ENCODE measurements at regions of chr17 and their contacts with region 1.

Region 1: DNA sequence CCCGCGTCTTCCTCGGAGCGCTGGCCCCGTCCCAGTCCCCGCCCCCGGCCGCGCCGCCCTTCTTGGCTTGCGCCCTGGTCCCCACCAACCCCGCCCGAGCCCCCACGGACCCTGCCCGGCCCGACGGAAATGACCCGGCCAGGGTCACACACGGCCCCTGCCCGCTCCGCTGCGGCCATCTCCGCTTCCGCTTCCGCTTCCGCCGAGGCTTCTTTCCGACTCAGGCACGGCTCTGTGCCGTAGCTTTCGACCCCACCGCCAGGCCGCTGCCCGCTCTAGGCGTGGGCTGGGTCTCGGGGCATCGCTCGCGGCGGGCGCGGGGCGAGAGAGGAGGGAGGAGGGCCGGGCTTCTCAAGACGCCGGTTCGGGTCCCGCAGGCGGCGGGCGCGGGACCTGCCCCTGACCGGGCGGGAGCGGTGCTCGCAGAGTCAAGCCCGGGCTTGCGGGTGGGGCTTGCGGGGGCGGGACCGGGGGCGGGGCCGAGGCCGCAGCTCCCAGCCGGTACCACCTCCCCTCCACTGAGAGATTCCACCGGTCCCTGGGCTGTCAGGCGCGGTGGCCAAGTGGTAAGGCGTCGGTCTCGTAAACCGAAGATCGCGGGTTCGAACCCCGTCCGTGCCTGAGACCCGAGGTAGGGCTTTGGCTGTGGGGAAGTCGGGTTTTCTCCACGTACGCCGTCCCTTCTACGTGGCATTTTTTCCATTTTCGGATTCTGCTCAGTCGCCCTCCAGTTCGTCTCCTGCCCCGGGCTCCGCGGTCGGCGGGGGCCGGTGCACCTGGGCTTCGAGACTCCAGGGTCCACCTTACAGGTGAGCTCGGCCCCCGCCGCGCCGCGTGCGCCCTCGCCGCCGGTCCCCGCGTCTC is 158.3 kb downstream of the RAB11FIP4 start:
- DNase-seq: peak; percentile 73 to 95 (median 88)
- ATAC-seq: peak; percentile 89
- H3K4me3 ChIP-seq: peak overlapping the region; percentile 73 to 87
- H3K4me3 Mint-ChIP-seq: peak overlapping the region; percentile 87
- H3K27ac ChIP-seq: peak overlapping the region; percentile 56 to 75
- H3K27ac Mint-ChIP-seq: peak overlapping the region; percentile 64
- H3K4me1 ChIP-seq: peaks cover 17% of the 10 kb centered on the region
- H3K4me1 Mint-ChIP-seq: peaks cover 16% of the 10 kb centered on the region
- H3K27me3 ChIP-seq: no peaks in the 10 kb centered on the region
- H3K27me3 Mint-ChIP-seq: no peaks in the 10 kb centered on the region
- CTCF ChIP-seq: no peak

Region 2: GRCh38 chr17:31156326-31156725 is 393.4 kb before region 1 on chr17:
- CTCF ChIA-PET with region 1: no interaction called
- POLR2A ChIA-PET with region 1: no interaction called
- intact Hi-C with region 1: no loop called
- DNase-seq: no peak
- ATAC-seq: no peak
- H3K4me3 ChIP-seq: no peak overlapping the region
- H3K4me3 Mint-ChIP-seq: no peak overlapping the region
- H3K27ac ChIP-seq: no peak overlapping the region
- H3K27ac Mint-ChIP-seq: no peak overlapping the region
- H3K4me1 ChIP-seq: no peaks in the 10 kb centered on the region
- H3K4me1 Mint-ChIP-seq: peaks cover 19% of the 10 kb centered on the region
- H3K27me3 ChIP-seq: no peaks in the 10 kb centered on the region
- H3K27me3 Mint-ChIP-seq: no peaks in the 10 kb centered on the region
- CTCF ChIP-seq: no peak

Region 3: DNA sequence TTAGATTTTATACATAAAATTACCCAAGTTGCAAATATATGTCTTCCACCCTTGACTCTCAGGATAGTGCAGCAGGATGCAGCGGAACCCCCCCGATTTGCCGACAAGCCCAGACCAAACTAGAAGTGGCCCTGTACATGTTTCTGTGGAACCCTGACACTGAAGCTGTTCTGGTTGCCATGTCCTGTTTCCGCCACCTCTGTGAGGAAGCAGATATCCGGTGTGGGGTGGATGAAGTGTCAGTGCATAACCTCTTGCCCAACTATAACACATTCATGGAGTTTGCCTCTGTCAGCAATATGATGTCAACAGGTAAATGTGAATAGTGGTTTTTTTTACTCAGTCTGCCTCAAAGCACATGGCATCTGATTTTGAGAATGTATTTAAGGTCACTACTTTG is 323.4 kb before region 1 on chr17:
- CTCF ChIA-PET with region 1: no interaction called
- POLR2A ChIA-PET with region 1: no interaction called
- intact Hi-C with region 1: no loop called
- DNase-seq: peak in 1 of 9 experiments; percentile 12
- ATAC-seq: no peak
- H3K4me3 ChIP-seq: no peak overlapping the region
- H3K4me3 Mint-ChIP-seq: no peak overlapping the region
- H3K27ac ChIP-seq: no peak overlapping the region
- H3K27ac Mint-ChIP-seq: no peak overlapping the region
- H3K4me1 ChIP-seq: no peaks in the 10 kb centered on the region
- H3K4me1 Mint-ChIP-seq: peaks cover 5% of the 10 kb centered on the region
- H3K27me3 ChIP-seq: no peaks in the 10 kb centered on the region
- H3K27me3 Mint-ChIP-seq: no peaks in the 10 kb centered on the region
- CTCF ChIP-seq: no peak

Region 4: GRCh38 chr17:31487648-31488263 is 62.0 kb before region 1 on chr17:
- CTCF ChIA-PET with region 1: no interaction called
- POLR2A ChIA-PET with region 1: no interaction called
- intact Hi-C with region 1: loop called in 1 of 2 experiments (anchors 1 kb)
- DNase-seq: peak; percentile 92 to 98 (median 96)
- ATAC-seq: peak; percentile 91
- H3K4me3 ChIP-seq: peak overlapping the region; percentile 80 to 83
- H3K4me3 Mint-ChIP-seq: peak overlapping the region; percentile 92
- H3K27ac ChIP-seq: peak overlapping the region; percentile 85 to 89
- H3K27ac Mint-ChIP-seq: peak overlapping the region; percentile 96
- H3K4me1 ChIP-seq: peaks cover 49% of the 10 kb centered on the region
- H3K4me1 Mint-ChIP-seq: peaks cover 50% of the 10 kb centered on the region
- H3K27me3 ChIP-seq: no peaks in the 10 kb centered on the region
- H3K27me3 Mint-ChIP-seq: no peaks in the 10 kb centered on the region
- CTCF ChIP-seq: no peak

Region 5: GRCh38 chr17:31494259-31495021 is 55.3 kb before region 1 on chr17:
- CTCF ChIA-PET with region 1: no interaction called
- POLR2A ChIA-PET with region 1: no interaction called
- intact Hi-C with region 1: loop called in 1 of 2 experiments (anchors 2 kb)
- DNase-seq: peak in 8 of 9 experiments; percentile 53 to 91 (median 72)
- ATAC-seq: peak; percentile 81
- H3K4me3 ChIP-seq: peak overlapping the region in 1 of 2 experiments; percentile 20
- H3K4me3 Mint-ChIP-seq: peak overlapping the region; percentile 76
- H3K27ac ChIP-seq: peak overlapping the region; percentile 76 to 89
- H3K27ac Mint-ChIP-seq: peak overlapping the region; percentile 97
- H3K4me1 ChIP-seq: peaks cover 97% of the 10 kb centered on the region
- H3K4me1 Mint-ChIP-seq: peaks cover 97% of the 10 kb centered on the region
- H3K27me3 ChIP-seq: no peaks in the 10 kb centered on the region
- H3K27me3 Mint-ChIP-seq: no peaks in the 10 kb centered on the region
- CTCF ChIP-seq: no peak

Region 6: DNA sequence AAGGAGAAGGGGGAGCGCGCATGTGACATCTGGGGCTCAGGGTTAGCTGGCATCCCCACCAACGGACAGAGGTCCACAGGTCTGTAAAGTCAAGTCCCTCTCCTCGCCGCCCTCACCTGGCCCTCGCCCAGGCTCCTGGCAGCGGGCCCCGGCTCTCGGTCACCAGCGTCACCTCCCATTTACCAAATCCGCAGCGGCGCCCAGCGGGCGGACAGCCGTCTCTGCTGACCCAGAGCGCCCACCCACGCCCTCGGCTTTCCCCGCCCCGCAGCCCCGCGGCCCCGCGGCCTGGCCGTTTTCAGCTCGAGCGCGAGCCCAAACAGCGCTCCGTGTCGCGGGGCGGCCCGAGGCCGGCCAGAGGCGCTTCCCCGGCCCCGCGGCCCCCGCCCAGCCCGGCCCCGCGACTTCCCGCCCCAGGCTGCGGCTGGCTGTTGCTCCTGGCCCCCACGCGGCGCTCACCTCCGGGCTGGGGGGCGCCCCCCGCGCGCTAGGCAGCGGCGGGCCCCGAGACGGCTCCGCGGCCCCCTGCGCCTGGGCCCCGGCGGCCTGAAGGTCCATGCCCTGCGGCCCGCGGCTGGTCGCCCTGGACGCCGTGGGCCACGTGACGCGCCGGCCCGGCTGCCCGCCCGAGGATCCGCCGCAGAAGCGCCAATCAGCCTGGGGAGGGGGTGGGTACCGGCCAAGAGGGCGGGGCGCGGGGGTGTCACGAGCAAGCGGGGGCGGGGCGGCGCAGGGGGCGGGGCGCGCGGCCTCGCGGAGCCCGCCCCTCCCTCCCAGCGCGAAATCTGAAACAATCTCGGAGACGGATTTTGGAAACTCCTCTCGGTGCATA is 309.1 kb after region 1 on chr17 and contains the start of gene COPRS:
- CTCF ChIA-PET with region 1: no interaction called
- POLR2A ChIA-PET with region 1: no interaction called
- intact Hi-C with region 1: loop called in 1 of 2 experiments (anchors 2 kb)
- DNase-seq: peak; percentile 53 to 88 (median 77)
- ATAC-seq: peak; percentile 92
- H3K4me3 ChIP-seq: peak within 1 kb of the TSS; percentile 53 to 69
- H3K4me3 Mint-ChIP-seq: peak within 1 kb of the TSS; percentile 86
- H3K27ac ChIP-seq: no peak within 1 kb of the TSS
- H3K27ac Mint-ChIP-seq: peak within 1 kb of the TSS; percentile 15
- H3K4me1 ChIP-seq: peaks cover 14% of the 10 kb centered on the region
- H3K4me1 Mint-ChIP-seq: peaks cover 16% of the 10 kb centered on the region
- H3K27me3 ChIP-seq: no peaks in the 10 kb centered on the region
- H3K27me3 Mint-ChIP-seq: no peaks in the 10 kb centered on the region
- CTCF ChIP-seq: no peak
- total RNA-seq, gene COPRS: 2.4 to 2.6 TPM

Region 7: GRCh38 chr17:31900877-31901276 is 351.1 kb after region 1 on chr17:
- CTCF ChIA-PET with region 1: no interaction called
- POLR2A ChIA-PET with region 1: no interaction called
- intact Hi-C with region 1: no loop called
- DNase-seq: no peak
- ATAC-seq: no peak
- H3K4me3 ChIP-seq: peak overlapping the region; percentile 65 to 72
- H3K4me3 Mint-ChIP-seq: no peak overlapping the region
- H3K27ac ChIP-seq: peak overlapping the region; percentile 57 to 71
- H3K27ac Mint-ChIP-seq: no peak overlapping the region
- H3K4me1 ChIP-seq: peaks cover 10% of the 10 kb centered on the region
- H3K4me1 Mint-ChIP-seq: peaks cover 18% of the 10 kb centered on the region
- H3K27me3 ChIP-seq: no peaks in the 10 kb centered on the region
- H3K27me3 Mint-ChIP-seq: no peaks in the 10 kb centered on the region
- CTCF ChIP-seq: no peak

Measured in CD8-positive, alpha-beta T cell (primary cell).